Colonic mucosa (tissue), 4 donors: ENCODE measurements at regions of chr10 and their contacts with region 1.

Region 1: DNA sequence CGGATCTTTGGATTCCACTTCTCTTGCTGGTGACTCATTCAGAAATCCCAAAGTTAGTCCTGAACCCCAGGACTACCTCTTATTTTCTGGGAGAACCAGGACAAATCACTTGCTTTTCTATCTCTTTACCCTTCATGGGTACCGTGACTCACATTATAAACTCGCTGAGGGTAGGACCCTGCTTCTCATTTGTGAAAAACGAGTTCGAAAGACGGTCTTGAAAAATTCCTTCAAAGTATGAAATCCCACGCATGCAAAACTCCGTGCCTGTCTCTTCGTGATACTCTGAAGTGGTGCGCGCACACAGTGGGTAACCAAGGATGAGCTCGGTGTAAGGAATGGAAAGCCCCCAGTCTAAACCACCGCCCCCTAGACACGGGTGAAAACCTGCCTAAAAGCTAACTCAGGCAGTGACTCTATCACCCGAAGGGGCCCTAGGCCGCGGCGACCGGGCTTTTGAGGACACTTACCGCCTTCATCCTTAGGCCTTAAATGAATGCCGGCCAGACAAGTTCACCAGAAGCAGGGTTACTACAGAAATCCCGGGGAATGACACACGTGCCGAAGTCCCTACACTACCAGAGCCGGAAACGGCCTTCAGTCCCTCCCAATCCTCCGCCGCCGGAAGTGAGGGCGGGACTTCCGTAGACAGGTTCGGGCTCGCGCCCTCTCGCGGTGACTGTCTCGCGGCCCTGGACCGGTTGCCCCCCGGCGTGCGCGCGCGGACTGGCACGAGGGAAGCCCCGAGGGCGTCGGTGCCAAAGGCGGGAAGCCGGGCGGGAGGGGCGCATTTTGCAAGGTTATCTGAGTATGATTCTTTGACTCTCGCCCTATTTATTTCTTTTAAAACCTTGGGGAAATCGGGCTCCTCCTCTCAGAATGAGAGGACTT is at the start of gene NOC3L:
- DNase-seq: peak; percentile 99
- H3K4me3 ChIP-seq: peak within 1 kb of the TSS; percentile 51
- H3K27ac ChIP-seq: peak within 1 kb of the TSS; percentile 26
- H3K4me1 ChIP-seq: peaks cover 3% of the 10 kb centered on the region
- H3K27me3 ChIP-seq: no peaks in the 10 kb centered on the region
- CTCF ChIP-seq: peak; percentile 88
- total RNA-seq, gene NOC3L: 7.9 to 10.3 TPM

Region 2: DNA sequence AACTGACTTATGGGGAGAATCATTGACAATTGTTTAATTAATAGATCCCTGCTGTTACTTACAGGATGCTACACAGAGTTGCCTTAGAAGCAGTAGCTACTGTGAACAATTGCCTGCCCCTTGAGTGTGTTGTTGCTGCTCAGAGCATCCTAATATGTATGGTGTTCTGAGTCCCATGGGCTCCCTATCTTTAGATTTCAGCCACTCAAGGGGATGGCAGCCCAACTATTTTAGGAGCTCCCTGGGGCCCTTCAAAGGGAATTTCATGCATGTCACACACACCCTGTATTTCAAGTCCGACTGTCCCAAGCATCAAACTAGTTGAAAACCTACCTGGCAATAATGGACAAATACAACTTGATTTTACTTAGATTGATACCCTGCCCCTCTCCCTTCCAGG is 111.0 kb before region 1 on chr10:
- intact Hi-C with region 1: no loop called
- DNase-seq: no peak
- H3K4me3 ChIP-seq: no peak overlapping the region
- H3K27ac ChIP-seq: no peak overlapping the region
- H3K4me1 ChIP-seq: no peaks in the 10 kb centered on the region
- H3K27me3 ChIP-seq: no peaks in the 10 kb centered on the region
- CTCF ChIP-seq: no peak

Region 3: GRCh38 chr10:94403380-94404213 is 41.0 kb after region 1 on chr10:
- intact Hi-C with region 1: loop called (anchors 2 kb)
- DNase-seq: peak; percentile 77
- H3K4me3 ChIP-seq: peak overlapping the region; percentile 89
- H3K27ac ChIP-seq: peak overlapping the region; percentile 99
- H3K4me1 ChIP-seq: no peaks in the 10 kb centered on the region
- H3K27me3 ChIP-seq: no peaks in the 10 kb centered on the region
- CTCF ChIP-seq: no peak

Region 4: DNA sequence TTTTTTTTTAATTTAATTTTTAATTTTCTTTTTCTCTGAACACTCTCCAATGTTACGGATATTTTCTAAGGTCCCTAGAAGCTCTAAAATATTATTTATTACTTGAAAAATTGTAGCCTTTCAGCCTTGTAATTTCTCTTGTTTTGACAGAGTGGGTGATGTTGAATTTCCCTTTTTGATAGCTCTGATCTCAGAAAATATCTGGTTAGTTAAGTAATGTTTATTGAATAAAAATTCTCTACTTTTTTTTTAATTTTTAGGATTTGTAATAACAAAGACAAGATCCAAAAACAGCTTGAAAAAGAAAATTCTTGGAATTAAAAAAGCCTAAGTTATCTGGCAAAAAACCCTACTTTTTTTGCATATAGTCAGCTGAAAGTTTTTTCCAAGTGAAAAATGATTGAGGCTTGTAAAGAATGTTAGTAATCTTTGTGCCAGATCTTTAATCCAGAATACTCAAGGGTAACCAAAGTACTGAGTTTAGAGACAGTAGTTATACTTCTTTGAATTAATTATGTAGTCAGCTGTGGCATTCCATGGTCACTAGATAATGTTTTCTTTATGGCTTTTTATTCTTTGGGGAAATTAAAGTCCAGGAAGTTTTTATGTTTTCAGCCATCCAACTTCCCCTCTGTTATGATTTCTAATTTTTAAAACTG is 66.6 kb after region 1 on chr10:
- intact Hi-C with region 1: no loop called
- DNase-seq: no peak
- H3K4me3 ChIP-seq: no peak overlapping the region
- H3K27ac ChIP-seq: no peak overlapping the region
- H3K4me1 ChIP-seq: no peaks in the 10 kb centered on the region
- H3K27me3 ChIP-seq: no peaks in the 10 kb centered on the region
- CTCF ChIP-seq: no peak